GM10248 (cell line): ENCODE measurements at regions of chr4 and their contacts with region 1.

Region 1: DNA sequence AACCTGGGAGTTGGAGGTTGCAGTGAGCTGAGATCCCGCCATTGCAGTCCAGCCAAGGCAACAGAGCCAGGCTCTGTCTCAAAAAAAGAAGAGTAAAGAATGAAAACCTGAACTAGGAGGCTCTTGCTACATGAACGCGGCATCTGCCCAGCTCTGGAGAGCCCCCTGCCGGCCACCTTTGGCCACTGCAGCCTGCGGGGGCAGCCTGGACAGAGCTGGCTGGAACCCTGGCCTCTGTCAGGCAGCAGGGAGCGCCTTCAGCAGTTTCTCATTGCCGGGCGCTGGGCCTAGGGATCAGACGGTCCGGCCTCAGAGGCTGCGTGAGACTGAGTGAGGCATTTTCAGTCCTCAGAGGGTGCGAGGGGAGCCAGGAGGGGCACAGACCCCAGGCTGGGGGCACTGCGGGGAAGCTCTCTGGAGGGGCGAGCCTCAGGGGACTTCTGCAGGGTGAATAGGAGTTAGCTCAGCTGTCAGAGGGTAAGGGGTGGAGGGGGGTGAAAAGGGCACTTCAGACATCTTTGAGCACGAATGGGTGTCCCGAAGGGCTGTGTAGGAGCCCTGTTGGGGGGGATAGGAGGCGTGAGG is 17.5 kb downstream of the DOK7 start:
- DNase-seq: peak; percentile 87
- CTCF ChIP-seq: peak; percentile 98

Region 2: GRCh38 chr4:3330707-3331106 is 149.9 kb before region 1 on chr4:
- CTCF ChIA-PET with region 1: interaction called, 11 read pairs
- POLR2A ChIA-PET with region 1: no interaction called
- DNase-seq: no peak
- CTCF ChIP-seq: no peak

Region 3: GRCh38 chr4:3355266-3355748 is 125.3 kb before region 1 on chr4:
- CTCF ChIA-PET with region 1: interaction called, 15 read pairs
- POLR2A ChIA-PET with region 1: interaction called, 3 read pairs
- DNase-seq: peak; percentile 65
- CTCF ChIP-seq: no peak

Region 4: DNA sequence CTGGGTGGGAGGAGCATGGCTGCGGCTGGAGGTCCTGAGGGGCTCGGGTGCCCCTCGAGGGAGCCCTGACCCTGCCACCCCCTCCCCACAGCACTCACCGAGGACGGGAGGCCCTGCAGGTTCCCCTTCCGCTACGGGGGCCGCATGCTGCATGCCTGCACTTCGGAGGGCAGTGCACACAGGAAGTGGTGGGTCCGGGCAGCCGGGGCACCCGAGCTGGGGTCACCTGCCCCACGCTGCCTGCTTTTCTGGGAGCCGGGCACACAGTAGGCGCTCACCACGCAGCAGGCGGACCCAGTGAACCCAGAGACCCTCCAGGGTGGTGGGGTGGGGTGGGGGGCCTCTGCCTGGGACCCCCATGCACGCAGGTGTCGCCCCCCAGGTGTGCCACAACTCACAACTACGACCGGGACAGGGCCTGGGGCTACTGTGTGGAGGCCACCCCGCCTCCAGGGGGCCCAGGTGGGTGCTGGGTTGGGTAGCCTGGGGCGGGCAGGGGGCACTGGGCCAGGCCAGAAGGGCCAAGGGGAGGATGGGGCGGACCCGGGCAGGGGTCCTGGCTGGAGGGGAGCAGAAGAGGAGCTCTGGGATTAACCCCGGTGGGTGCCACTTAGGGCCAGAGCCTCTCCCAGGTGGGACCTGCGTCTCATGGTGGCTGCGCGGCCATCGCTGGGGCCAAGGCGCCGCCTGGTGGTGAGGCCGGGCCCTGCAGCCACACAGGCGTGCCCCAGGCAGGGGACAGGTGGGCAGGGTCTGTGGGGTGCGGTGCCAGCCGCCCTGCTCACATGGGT is 37.5 kb before region 1 on chr4:
- CTCF ChIA-PET with region 1: interaction called, 10 read pairs
- POLR2A ChIA-PET with region 1: no interaction called
- DNase-seq: peak; percentile 93
- CTCF ChIP-seq: peak; percentile 99

Region 5: DNA sequence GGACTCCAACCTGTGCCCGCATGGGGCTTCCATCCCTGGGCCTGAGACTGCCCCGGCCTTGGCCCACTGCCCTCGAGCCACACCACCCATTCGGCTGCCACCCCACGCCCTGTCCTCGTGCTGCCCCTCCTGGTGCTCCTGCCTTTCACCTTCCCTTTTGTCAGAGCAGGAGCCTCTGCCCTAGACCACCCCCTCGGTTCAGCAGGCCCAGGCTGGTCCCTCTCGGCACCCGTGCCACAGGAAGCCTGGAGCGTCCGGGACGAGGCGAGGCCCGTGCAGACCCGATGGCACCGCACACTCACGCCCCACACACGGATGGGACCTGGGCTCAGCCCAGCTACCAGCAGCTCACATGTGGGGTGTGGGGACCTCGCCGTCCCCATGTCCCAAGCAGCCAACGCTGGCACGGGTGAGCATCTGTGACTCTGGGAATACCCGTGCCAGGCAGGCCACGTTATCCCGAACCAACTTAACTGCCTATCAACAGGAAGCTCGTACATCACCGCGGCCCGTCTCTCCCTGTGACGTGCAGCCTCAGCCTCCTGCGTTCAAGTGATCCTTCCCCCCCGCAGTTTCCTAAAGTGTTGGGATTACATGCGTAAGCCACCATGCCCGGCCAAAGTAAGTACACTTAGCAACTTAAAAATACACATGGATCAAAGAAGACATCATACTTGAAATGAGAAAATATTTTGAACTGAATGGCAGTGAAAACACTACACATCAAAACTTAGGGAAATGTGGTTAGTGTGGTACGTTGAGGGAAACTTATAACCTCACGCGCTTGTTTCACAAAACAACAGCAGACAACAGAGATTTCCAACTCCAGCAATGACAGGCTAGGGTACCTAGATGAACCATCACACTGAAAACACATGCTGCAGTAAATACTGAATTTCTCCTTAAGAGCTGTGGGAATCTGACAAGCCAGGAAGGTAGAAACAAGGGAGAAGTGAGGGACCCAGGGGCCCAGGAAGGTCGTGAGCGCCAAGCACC is 22.6 kb after region 1 on chr4:
- CTCF ChIA-PET with region 1: interaction called, 19 read pairs
- POLR2A ChIA-PET with region 1: no interaction called
- DNase-seq: no peak
- CTCF ChIP-seq: no peak

Region 6: DNA sequence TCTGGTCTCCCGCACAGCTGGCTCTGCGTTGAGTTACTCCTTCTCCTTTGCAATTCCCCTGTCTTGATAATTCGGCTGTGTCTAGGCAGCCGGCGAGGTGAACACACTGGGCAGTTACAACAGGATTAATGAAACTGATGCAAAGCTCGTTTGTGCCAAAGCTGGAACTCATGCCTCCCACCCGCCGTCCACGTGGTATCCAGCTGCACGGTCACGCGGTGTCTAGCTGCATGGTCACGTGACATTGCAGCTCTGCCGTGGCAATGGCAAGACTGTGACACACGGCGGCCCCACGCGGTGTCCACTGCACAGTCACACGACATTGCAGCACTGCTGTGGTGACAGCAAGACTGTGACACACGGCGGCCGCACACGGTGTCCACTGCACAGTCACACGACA is 82.8 kb after region 1 on chr4:
- CTCF ChIA-PET with region 1: no interaction called
- POLR2A ChIA-PET with region 1: no interaction called
- DNase-seq: no peak
- CTCF ChIP-seq: no peak